ENCODE measurements at regions of chr20 and their contacts with region 1.

Region 1: GRCh38 chr20:2840138-2840966 is at the starts of genes PCED1A and VPS16:
- DNase-seq: peak; percentile 88
- H3K4me3 ChIP-seq: peak within 1 kb of the TSS; percentile 74 to 96 (median 91)
- H3K27ac ChIP-seq: peak within 1 kb of the TSS; percentile 89 to 94 (median 93)
- H3K4me1 ChIP-seq: peaks cover 8 to 19% (median 17%) of the 10 kb centered on the region in 4 donors
- H3K27me3 ChIP-seq: no peaks in the 10 kb centered on the region
- CTCF ChIP-seq: no peak
- EP300 ChIP-seq: no peak
- POLR2A ChIP-seq: peak; percentile 72
- total RNA-seq, gene PCED1A: 15.5 to 85.7 (median 36.6) TPM
- total RNA-seq, gene VPS16: 29.2 to 42.2 (median 36.7) TPM

Region 2: DNA sequence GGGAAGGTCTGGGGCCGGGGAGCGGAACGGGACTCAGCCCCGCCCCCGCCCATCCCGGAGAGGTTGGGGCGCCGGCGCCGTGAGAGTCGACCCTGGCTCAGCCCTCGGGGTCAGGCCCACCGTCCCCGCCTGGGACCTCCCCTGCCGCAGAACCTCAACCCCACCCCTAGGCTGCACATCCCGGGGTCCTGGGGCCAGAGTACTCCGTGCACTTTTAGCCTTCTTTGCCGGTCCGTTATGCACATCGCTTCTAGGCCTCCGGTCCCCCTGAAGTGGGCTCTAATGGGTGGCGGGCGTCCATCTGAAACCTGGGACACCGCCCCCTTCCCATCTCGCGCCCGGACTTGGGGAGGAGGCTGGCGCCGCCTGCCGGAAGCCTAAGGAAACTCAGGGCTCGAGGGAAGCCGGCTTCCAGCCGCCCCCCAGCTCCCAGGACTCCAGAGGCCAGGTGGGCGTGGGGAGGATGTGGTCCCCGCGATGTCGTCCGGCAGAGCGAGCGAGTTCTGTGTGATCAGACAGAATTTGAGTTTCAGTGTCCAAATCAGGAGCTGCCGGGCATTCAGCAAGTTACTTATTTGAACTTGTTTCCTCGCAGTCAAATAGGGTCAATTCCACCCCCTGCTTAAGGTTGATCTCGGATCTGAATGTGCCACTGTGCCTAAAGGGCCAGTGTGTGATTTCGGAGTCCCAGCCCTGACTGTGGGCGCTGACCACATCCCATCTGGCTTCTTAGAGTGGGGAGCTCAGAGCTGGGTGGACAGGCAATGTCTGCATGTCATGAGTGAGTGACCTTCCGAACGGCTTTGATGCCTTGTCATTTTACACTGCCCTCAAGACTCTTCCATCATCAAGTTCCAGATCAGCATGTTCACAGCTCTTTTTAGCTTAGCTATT is 87.5 kb before region 1 on chr20:
- in situ Hi-C with region 1: no loop called
- intact Hi-C with region 1: no loop called
- DNase-seq: peak; percentile 38
- H3K4me3 ChIP-seq: peak overlapping the region; percentile 18 to 44 (median 33)
- H3K27ac ChIP-seq: peak overlapping the region in 1 of 4 donors; percentile 75
- H3K4me1 ChIP-seq: peaks cover 15 to 30% (median 29%) of the 10 kb centered on the region in 4 donors
- H3K27me3 ChIP-seq: peaks cover 12% of the 10 kb centered on the region
- CTCF ChIP-seq: peak; percentile 57 to 71 (median 64)
- EP300 ChIP-seq: no peak
- POLR2A ChIP-seq: no peak

Region 3: GRCh38 chr20:2880650-2881049 is 40.3 kb after region 1 on chr20:
- in situ Hi-C with region 1: no loop called
- intact Hi-C with region 1: loop called (anchors 1 kb)
- DNase-seq: no peak
- H3K4me3 ChIP-seq: no peak overlapping the region
- H3K27ac ChIP-seq: no peak overlapping the region
- H3K4me1 ChIP-seq: peaks cover 0 to 49% (median 4%) of the 10 kb centered on the region in 4 donors
- H3K27me3 ChIP-seq: no peaks in the 10 kb centered on the region
- CTCF ChIP-seq: no peak
- EP300 ChIP-seq: no peak
- POLR2A ChIP-seq: no peak